T-cell (primary cell): ENCODE measurements at regions of chr6 and their contacts with region 1.

Region 1: DNA sequence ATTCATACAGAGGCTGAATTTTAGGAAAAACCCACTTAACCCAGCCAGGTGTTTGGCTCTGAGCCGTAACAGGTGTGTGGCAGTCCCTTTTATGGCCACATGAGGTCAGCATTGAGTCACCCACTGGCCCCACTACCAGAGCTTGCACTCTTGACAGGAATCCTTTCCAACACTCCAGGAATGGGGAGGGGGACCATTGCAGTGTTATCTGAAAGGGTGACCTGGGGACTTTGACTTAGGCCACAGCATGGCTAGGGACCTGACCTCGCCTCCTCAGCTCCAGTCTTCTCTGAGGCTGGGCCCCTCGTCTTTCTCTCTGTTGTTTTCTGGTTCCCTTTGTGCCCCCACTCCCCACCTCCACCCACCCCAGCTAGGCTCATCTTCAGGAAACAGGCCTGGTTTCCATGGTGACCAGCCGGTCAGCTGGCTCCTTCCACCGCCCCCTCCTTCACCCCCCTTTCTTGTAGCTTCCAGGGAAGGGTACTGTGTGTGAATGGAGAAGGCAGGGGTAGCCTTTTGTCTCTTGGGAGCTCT is 2.1 kb upstream of the TMEM151B start:
- DNase-seq: peak in 28 of 35 experiments; percentile 29 to 86 (median 56)
- ATAC-seq: peak in 1 of 4 experiments; percentile 16
- H3K4me3 ChIP-seq: no peak overlapping the region
- H3K4me3 Mint-ChIP-seq: no peak overlapping the region
- H3K27ac ChIP-seq: no peak overlapping the region
- H3K27ac Mint-ChIP-seq: peak overlapping the region in 1 of 2 donors; percentile 27
- H3K4me1 ChIP-seq: peaks cover 14 to 34% of the 10 kb centered on the region in 2 experiments
- H3K4me1 Mint-ChIP-seq: peaks cover 24 to 49% (median 36%) of the 10 kb centered on the region in 3 donors
- H3K27me3 ChIP-seq: peaks cover 7 to 46% of the 10 kb centered on the region in 2 experiments
- H3K27me3 Mint-ChIP-seq: peaks cover 26 to 41% of the 10 kb centered on the region in 2 donors

Region 2: GRCh38 chr6:44041461-44042260 is 226.5 kb before region 1 on chr6:
- CTCF ChIA-PET with region 1: no interaction called
- POLR2A ChIA-PET with region 1: no interaction called
- DNase-seq: no peak
- ATAC-seq: no peak
- H3K4me3 ChIP-seq: no peak overlapping the region
- H3K4me3 Mint-ChIP-seq: no peak overlapping the region
- H3K27ac ChIP-seq: no peak overlapping the region
- H3K27ac Mint-ChIP-seq: no peak overlapping the region
- H3K4me1 ChIP-seq: no peaks in the 10 kb centered on the region
- H3K4me1 Mint-ChIP-seq: no peaks in the 10 kb centered on the region
- H3K27me3 ChIP-seq: peaks cover 0 to 13% of the 10 kb centered on the region in 2 experiments
- H3K27me3 Mint-ChIP-seq: peaks cover 4 to 6% of the 10 kb centered on the region in 2 donors

Region 3: GRCh38 chr6:44180406-44180805 is 87.8 kb before region 1 on chr6:
- CTCF ChIA-PET with region 1: no interaction called
- POLR2A ChIA-PET with region 1: interaction called in 1 of 2 experiments, 13 read pairs
- DNase-seq: no peak
- ATAC-seq: no peak
- H3K4me3 ChIP-seq: no peak overlapping the region
- H3K4me3 Mint-ChIP-seq: no peak overlapping the region
- H3K27ac ChIP-seq: no peak overlapping the region
- H3K27ac Mint-ChIP-seq: no peak overlapping the region
- H3K4me1 ChIP-seq: peaks cover 0 to 13% of the 10 kb centered on the region in 2 experiments
- H3K4me1 Mint-ChIP-seq: peaks cover 10 to 16% (median 11%) of the 10 kb centered on the region in 3 donors
- H3K27me3 ChIP-seq: peaks cover 0 to 27% of the 10 kb centered on the region in 2 experiments
- H3K27me3 Mint-ChIP-seq: peaks cover 0 to 2% of the 10 kb centered on the region in 2 donors

Region 4: DNA sequence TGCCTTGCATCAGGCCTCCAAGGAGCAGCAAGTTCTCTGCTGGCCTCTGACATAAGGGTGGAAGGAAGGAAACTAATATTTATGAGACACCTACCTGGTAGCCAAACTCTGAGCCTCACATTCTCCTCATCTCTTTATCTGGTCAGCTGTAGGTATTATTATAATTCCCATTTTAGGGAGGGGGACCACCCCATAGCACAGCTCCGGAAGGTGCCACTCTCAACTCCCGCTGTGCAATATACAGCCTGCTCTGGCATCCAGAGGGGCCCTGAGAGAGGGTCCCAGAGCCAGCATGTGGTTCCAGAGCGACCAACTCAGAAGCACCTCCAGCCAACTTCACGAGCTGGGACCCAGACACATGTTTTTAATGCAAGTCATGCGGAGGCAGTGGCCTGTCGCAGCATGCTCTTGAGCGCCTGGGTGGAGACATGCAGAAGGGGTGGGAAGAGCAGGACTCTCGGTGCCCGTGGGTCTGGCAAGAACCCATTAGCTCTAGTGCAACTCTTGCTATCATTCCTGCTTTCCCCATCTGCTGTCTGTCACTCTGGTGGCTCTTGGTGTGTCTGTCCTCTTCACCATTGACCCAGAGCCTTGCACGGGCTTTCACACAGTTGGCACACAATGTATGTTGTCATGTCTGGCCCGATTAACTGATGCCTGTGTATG is 66.4 kb before region 1 on chr6:
- CTCF ChIA-PET with region 1: interaction called in 1 of 2 experiments, 11 read pairs
- POLR2A ChIA-PET with region 1: interaction called in 1 of 2 experiments, 3 read pairs
- DNase-seq: no peak
- ATAC-seq: no peak
- H3K4me3 ChIP-seq: no peak overlapping the region
- H3K4me3 Mint-ChIP-seq: no peak overlapping the region
- H3K27ac ChIP-seq: no peak overlapping the region
- H3K27ac Mint-ChIP-seq: no peak overlapping the region
- H3K4me1 ChIP-seq: no peaks in the 10 kb centered on the region
- H3K4me1 Mint-ChIP-seq: no peaks in the 10 kb centered on the region
- H3K27me3 ChIP-seq: peaks cover 0 to 28% of the 10 kb centered on the region in 2 experiments
- H3K27me3 Mint-ChIP-seq: peaks cover 0 to 4% of the 10 kb centered on the region in 2 donors

Region 5: GRCh38 chr6:44304282-44305199 is 36.4 kb after region 1 on chr6:
- CTCF ChIA-PET with region 1: interaction called, 7 to 11 read pairs
- POLR2A ChIA-PET with region 1: no interaction called
- DNase-seq: peak in 28 of 35 experiments; percentile 7 to 65 (median 24)
- ATAC-seq: peak; percentile 62 to 75 (median 72)
- H3K4me3 ChIP-seq: no peak overlapping the region
- H3K4me3 Mint-ChIP-seq: no peak overlapping the region
- H3K27ac ChIP-seq: no peak overlapping the region
- H3K27ac Mint-ChIP-seq: no peak overlapping the region
- H3K4me1 ChIP-seq: no peaks in the 10 kb centered on the region
- H3K4me1 Mint-ChIP-seq: no peaks in the 10 kb centered on the region
- H3K27me3 ChIP-seq: no peaks in the 10 kb centered on the region
- H3K27me3 Mint-ChIP-seq: no peaks in the 10 kb centered on the region

Region 6: DNA sequence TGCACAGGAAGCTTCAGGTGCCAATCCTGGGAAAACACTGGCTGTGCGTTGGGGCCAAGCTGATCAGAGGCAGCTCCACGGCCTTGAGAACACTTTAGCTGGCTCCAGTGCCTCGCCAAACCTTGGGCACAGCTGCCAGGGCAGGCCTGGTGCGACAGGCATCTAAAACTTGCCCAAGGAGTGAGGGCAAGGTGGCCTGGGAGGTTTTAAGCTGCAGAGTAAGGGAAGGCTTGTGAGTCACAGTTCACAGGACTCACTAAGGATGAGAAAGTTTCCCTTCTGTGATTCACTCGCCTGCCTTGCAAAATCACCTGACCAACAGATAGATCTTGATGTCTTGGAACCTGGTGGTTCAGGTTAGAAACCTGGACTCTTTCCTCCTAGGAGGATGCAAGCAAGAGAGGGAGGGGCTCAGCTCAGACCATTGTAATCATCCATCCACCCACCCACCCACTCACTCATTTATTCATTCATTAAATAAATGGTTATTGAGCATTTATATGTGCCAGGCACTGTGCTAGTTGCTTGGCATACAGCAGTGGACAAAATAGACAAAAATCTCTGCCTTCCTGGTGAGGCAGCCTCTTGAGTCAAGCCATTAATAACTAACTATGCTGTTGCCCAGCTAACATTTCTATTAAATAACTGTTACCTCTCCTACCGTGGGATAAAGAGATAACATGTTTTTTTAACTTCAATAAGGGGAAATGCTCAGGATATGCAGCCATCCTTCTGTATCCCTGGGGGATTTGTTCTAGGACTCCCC is 71.9 kb after region 1 on chr6:
- CTCF ChIA-PET with region 1: interaction called, 3 to 15 read pairs
- POLR2A ChIA-PET with region 1: no interaction called
- DNase-seq: no peak
- ATAC-seq: no peak
- H3K4me3 ChIP-seq: no peak overlapping the region
- H3K4me3 Mint-ChIP-seq: no peak overlapping the region
- H3K27ac ChIP-seq: no peak overlapping the region
- H3K27ac Mint-ChIP-seq: no peak overlapping the region
- H3K4me1 ChIP-seq: peaks cover 0 to 5% of the 10 kb centered on the region in 2 experiments
- H3K4me1 Mint-ChIP-seq: peaks cover 0 to 2% (median 2%) of the 10 kb centered on the region in 3 donors
- H3K27me3 ChIP-seq: peaks cover 9 to 45% of the 10 kb centered on the region in 2 experiments
- H3K27me3 Mint-ChIP-seq: peaks cover 35 to 39% of the 10 kb centered on the region in 2 donors